Activated B cell treated with CpG ODN at 0.5 μM for 24 hours (primary cell): ENCODE measurements at regions of chr1 and their contacts with region 1.

Region 1: DNA sequence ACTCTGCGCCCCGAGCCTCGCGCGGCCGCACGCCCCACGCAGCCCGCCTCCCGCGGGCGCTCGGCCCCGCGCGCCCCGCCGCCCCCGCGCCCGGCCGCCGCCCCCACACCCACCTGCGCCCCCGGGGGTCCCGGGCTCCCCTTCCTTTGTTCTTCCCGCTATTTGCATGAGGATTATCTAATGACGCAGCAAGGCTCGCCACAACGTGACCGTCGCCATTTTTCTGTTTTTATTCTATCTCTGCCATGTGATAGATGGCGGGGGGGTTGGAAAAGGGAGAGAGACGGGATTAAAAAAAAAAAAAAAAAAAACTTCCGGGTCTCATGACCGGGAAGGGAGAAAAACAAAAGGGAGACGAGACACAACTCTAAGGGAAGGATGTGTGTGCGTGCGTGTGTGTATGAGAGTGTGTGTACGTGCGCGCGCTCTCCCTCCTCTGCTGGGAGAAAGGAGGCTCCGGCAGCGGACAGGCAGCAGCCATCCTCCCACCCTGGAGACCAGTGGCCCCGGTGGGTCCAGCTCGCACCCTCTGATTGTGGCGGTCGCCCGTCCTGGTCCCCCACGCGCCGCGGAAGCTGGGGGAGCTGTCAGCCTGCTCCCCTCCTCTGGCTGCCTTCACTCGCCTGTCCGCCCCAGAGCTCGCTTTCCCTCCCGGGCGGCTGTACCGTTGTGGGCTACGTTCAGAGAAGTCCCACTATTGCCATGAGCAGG is 80.4 kb upstream of the AK4 start:
- DNase-seq: peak; percentile 50
- ATAC-seq: peak; percentile 15
- H3K4me3 Mint-ChIP-seq: peak overlapping the region; percentile 97
- H3K27ac Mint-ChIP-seq: peak overlapping the region; percentile 99
- H3K4me1 Mint-ChIP-seq: peaks cover 48% of the 10 kb centered on the region
- H3K27me3 Mint-ChIP-seq: no peaks in the 10 kb centered on the region
- CTCF ChIP-seq: no peak

Region 2: GRCh38 chr1:64956733-64957441 is 110.8 kb before region 1 on chr1:
- CTCF ChIA-PET with region 1: no interaction called
- POLR2A ChIA-PET with region 1: interaction called, 3 read pairs
- intact Hi-C with region 1: loop called (anchors 2 kb)
- DNase-seq: no peak
- ATAC-seq: peak; percentile 83
- H3K4me3 Mint-ChIP-seq: no peak overlapping the region
- H3K27ac Mint-ChIP-seq: no peak overlapping the region
- H3K4me1 Mint-ChIP-seq: peaks cover 68% of the 10 kb centered on the region
- H3K27me3 Mint-ChIP-seq: no peaks in the 10 kb centered on the region
- CTCF ChIP-seq: no peak

Region 3: DNA sequence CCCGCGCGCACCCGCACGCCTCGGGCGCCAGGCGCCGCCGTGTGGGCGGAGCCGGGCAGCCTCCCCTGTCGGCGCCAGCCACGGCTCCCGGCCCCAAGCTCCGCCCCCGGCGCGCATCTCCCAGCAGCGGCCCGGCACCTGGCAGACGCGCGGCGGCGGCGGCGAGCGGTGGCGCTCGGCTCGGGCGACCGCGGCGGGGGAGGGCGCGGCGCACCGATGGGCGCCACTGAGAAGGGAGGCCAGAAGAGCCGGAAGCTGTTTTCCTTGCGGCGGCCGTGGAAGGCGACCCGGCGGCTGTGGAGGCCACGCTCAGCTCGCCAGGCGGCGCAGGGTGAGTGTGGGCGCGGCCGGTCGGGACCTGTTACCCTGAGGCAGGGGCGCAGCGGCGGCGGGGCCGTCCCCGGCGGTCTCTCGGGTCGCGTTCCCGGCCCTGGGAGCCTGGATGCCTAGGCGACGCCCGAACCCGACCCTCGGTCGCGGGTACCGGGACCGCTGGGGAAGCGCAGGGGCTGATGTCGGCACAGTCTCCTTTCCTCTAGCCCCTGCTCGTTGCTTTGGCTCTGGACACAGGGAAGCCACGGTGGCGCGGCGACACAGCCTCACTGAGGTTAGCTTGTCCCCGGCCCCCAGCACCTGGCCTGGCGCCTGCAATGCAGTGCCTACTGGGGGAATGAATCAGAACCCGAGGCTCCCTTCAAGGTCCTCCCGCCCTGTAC is 186.8 kb after region 1 on chr1:
- CTCF ChIA-PET with region 1: no interaction called
- POLR2A ChIA-PET with region 1: no interaction called
- intact Hi-C with region 1: loop called (anchors 2 kb)
- DNase-seq: peak; percentile 81
- ATAC-seq: peak; percentile 97
- H3K4me3 Mint-ChIP-seq: peak overlapping the region; percentile 83
- H3K27ac Mint-ChIP-seq: no peak overlapping the region
- H3K4me1 Mint-ChIP-seq: peaks cover 12% of the 10 kb centered on the region
- H3K27me3 Mint-ChIP-seq: peaks cover 18% of the 10 kb centered on the region
- CTCF ChIP-seq: no peak

Region 4: GRCh38 chr1:65372557-65372956 is 304.9 kb after region 1 on chr1:
- CTCF ChIA-PET with region 1: no interaction called
- POLR2A ChIA-PET with region 1: no interaction called
- intact Hi-C with region 1: no loop called
- DNase-seq: no peak
- ATAC-seq: no peak
- H3K4me3 Mint-ChIP-seq: no peak overlapping the region
- H3K27ac Mint-ChIP-seq: no peak overlapping the region
- H3K4me1 Mint-ChIP-seq: no peaks in the 10 kb centered on the region
- H3K27me3 Mint-ChIP-seq: peaks cover 3% of the 10 kb centered on the region
- CTCF ChIP-seq: no peak